Tibial artery (tissue), 4 donors: ENCODE measurements at regions of chr10 and their contacts with region 1.

Region 1: DNA sequence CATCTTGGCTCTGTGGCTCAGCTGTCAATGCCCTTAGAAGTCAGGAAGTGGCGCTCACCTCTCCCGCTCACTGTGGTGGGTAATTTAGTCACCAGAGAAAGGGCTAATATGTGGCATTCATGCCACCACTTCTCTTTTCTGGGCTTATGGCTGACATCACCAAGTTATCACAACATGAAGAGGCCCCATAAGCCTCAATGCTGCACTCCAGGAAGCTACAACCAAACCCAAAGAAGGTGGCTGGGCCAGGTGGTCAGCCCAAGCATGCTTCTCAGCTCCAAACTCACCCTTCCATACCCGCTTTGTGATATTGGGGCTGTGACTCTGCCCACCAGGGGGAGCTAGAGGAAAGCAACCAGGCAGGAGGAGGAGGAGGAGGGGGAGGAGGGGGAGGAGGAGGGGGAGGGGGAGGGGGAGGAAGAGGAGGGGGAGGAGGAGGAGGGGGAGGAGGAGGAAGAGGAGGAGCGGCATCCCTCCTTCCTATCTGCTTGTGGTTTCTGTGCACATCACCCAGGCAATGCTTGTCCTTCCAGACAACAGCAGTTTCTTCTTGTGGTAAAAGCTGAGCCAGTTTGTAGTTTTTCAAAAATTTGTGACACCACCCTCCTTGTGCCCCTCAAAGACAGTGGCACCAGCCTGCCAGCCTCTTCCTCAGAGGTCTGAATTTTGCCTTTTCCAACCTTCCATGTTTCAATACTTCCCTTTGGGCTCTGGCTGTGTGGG is 42.1 kb downstream of the CYP26A1 start:
- DNase-seq: peak; percentile 72 to 80
- H3K4me3 ChIP-seq: no peak overlapping the region
- H3K27ac ChIP-seq: no peak overlapping the region
- H3K4me1 ChIP-seq: no peaks in the 10 kb centered on the region
- H3K27me3 ChIP-seq: no peaks in the 10 kb centered on the region
- CTCF ChIP-seq: peak; percentile 22 to 25

Region 2: DNA sequence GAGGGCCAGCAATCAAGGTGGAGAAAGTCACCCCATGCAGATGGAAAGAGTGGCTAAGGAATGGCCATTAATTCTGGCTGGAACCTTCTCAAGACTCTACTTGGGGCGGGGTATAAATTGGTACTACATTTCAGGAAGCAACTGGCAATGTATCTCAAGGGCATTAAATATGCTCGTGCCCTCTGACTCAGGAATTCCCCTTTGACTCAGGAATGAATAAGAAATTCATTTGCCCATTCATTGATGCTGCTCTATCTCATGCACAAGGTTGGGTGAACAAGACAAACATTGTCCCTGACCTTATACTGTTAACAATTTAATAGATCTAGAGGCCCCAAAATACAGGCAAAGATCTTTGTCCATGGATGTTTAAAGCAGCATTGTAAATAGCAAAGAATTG is 178.2 kb after region 1 on chr10:
- intact Hi-C with region 1: loop called (anchors 10 kb)
- DNase-seq: no peak
- H3K4me3 ChIP-seq: no peak overlapping the region
- H3K27ac ChIP-seq: no peak overlapping the region
- H3K4me1 ChIP-seq: no peaks in the 10 kb centered on the region
- H3K27me3 ChIP-seq: no peaks in the 10 kb centered on the region
- CTCF ChIP-seq: no peak

Region 3: DNA sequence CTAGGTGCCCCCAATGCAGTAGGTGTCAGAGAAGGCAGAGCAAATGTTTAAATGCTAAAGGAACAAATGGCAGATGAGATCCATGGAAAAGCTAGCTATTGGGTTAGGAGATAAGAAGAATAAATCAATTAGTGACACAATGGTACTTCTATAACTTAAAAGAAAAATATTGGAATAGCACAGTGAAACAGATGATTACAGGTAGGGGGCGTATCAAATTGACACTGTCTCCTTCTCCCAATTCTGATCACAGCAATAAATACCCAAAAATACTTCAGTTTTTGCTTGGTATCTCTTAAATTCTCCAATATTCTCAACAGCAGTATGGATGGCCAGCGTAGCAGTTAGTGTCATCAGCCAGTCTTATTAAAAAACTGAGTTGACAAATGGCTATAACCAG is 581.4 kb after region 1 on chr10:
- intact Hi-C with region 1: no loop called
- DNase-seq: no peak
- H3K4me3 ChIP-seq: no peak overlapping the region
- H3K27ac ChIP-seq: no peak overlapping the region
- H3K4me1 ChIP-seq: peaks cover 0 to 17% (median 4%) of the 10 kb centered on the region in 4 donors
- H3K27me3 ChIP-seq: no peaks in the 10 kb centered on the region
- CTCF ChIP-seq: no peak